ENCODE measurements at regions of chr2 and their contacts with region 1.

Region 1: DNA sequence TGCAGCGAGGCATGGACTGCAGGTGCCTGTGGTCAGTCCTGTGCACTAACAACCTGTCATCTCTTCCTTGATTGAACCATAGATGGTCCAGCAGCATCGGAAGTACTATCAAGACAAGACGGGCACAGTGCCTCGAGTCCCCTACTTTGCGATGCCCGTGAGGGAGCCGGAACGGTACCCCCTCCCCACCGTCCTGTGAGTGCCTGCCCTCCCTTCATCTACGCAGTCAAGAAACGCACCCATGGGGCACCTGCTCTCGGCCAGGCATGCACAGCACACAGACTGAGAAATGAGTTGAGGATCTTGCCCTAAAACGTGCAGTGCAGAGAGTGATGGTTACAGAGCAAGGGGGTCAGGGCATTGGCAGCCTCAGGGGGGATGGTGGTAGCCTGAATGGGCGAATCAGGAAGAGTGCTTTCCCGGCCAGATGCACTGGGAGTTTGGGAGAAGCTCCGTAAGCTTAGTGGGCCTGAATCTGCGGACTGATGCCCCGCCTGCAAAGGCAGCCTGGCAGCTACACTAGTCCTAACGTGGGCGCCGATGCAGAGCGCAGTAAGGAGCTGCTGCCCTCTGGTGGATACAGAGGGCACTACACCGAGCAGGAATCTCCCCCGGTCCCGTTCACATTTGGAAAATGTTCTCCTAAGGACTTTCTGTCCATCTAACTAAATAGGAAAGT is 63.6 kb downstream of the CIB4 start:
- DNase-seq: peak; percentile 71 to 95
- ATAC-seq: peak; percentile 73 to 93
- H3K4me3 ChIP-seq: no peak overlapping the region
- H3K27ac ChIP-seq: peak overlapping the region in 1 of 2 experiments; percentile 47; a peak in 3 of 6 replicates
- H3K4me1 ChIP-seq: peaks cover 4% of the 10 kb centered on the region; the same call in 2 of the 3 replicates
- CTCF ChIP-seq: peak; percentile 98
- EP300 ChIP-seq: no peak
- POLR2A ChIP-seq: no peak
- RAD21 ChIP-seq: peak; percentile 93 to 96

Region 2: DNA sequence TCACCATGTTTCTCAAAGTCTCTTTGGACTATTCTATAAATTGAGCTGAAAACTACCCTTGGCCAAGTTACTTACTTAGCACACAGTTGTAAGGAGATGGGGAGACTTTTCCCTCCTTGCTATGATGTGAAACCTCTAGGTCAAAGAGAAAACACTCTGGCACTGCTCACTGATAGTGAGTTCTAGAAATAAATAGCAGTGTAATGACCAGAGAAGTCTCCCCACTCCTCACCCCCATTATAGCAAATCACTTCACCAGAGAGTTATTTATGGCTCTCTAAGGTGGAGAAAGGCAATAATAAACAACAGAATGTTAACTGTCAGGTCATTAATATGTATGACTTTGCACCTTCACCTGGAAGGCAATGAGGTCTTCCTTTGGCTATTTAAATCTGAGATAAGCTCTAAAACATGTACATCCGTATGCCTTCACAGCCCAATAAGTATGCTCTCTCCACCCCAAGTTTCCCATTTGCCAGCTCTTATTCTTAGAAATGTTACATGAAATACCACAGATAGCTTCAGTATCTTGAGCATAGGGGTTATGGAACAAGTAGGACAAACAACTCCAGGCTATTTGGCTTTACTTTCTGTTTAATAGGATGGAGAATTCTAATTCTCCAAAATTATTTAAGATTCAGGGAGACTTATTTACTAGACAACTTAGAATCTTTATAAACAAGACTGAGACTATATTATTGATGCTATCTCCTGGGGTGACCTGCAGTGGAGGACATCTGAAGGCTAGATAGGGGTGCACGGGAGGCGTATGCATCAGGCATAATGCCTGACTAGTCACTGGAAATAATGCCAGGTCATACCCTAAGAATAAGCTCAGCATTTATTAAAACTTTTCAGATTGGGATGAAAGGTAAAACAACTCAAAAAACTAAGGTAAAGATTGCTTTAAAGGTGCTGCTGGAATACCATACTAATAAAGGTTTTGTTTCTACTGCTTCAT is 838.9 kb before region 1 on chr2:
- CTCF ChIA-PET with region 1: no interaction called
- POLR2A ChIA-PET with region 1: no interaction called
- DNase-seq: no peak
- ATAC-seq: no peak
- H3K4me3 ChIP-seq: no peak overlapping the region
- H3K27ac ChIP-seq: no peak overlapping the region
- H3K4me1 ChIP-seq: no peaks in the 10 kb centered on the region
- CTCF ChIP-seq: no peak
- EP300 ChIP-seq: no peak
- POLR2A ChIP-seq: no peak
- RAD21 ChIP-seq: no peak

Region 3: DNA sequence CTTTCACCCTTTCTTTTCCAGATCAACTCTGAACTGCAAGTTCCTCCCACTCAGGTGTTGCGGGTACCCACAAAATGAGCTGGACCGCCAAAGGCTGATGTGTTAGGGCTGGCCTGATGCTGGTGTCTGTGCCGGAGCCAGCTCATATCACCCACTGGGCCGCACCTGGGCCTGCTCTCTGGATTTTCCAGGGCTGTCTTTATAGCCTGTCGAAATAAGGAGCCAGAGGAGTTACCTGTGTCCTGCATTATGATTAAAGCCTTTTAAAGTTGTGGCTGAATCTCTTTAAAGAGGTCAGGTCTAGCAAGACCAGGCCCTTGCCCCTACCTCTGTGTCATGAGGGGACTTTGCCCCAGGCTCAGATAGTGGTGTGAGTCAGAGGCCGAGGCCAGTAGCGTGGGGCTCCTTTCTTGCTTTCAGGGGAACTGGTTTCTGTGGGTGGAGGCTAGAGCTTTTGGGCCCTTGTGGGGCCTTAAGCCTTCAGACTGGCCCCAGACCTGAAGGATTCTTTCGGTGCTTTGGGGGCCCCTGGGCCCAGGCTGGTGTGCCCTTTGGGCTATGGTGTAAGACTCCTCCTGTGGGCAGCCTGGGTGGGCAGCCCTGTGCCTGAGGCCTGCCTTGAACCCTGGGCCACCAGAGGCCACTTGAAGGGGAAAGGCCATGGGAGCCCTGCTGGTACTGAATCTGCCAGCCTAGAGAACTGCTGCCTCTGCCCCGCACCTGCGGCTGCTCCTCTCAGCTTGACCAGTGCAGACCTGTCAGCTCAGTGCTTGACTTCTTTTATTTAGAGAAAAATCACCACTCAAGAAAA is 120.9 kb before region 1 on chr2:
- CTCF ChIA-PET with region 1: interaction called, 10 read pairs
- POLR2A ChIA-PET with region 1: no interaction called
- DNase-seq: peak in 1 of 2 experiments; percentile 43
- ATAC-seq: peak; percentile 30 to 70; a peak in 3 of 6 replicates
- H3K4me3 ChIP-seq: no peak overlapping the region
- H3K27ac ChIP-seq: peak overlapping the region; percentile 55 to 73
- H3K4me1 ChIP-seq: peaks cover 11% of the 10 kb centered on the region
- CTCF ChIP-seq: no peak
- EP300 ChIP-seq: no peak
- POLR2A ChIP-seq: no peak
- RAD21 ChIP-seq: no peak

Region 4: GRCh38 chr2:26509141-26509540 is 68.4 kb before region 1 on chr2:
- CTCF ChIA-PET with region 1: interaction called, 90 read pairs
- POLR2A ChIA-PET with region 1: no interaction called
- DNase-seq: no peak
- ATAC-seq: no peak
- H3K4me3 ChIP-seq: no peak overlapping the region
- H3K27ac ChIP-seq: no peak overlapping the region
- H3K4me1 ChIP-seq: peaks cover 1% of the 10 kb centered on the region; the same call in 1 of the 3 replicates
- CTCF ChIP-seq: no peak
- EP300 ChIP-seq: no peak
- POLR2A ChIP-seq: no peak
- RAD21 ChIP-seq: no peak

Region 5: DNA sequence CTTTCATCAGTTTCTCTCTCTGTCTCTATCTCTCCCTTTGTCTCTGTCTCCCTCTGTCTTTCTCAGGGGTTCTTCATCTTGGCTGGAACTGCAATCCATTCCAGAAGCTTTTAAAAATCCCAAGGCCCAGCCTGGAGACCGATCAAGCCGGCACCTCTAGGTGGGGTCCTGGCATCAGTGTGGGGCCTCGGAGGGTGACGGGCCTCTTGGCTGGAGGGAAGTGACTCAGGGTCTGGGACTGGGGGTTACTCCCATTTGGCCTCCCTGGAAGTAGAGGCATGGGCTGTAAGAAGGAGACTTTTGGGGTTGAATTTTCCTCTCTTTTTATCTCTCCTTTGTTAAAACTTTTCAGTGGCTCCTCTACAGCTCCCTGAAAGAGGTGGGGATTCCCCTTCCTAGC is 46.9 kb before region 1 on chr2:
- CTCF ChIA-PET with region 1: interaction called, 20 read pairs
- POLR2A ChIA-PET with region 1: no interaction called
- DNase-seq: no peak
- ATAC-seq: peak in 1 of 2 experiments; percentile 25; a peak in 2 of 6 replicates
- H3K4me3 ChIP-seq: no peak overlapping the region
- H3K27ac ChIP-seq: no peak overlapping the region
- H3K4me1 ChIP-seq: no peaks in the 10 kb centered on the region
- CTCF ChIP-seq: no peak
- EP300 ChIP-seq: no peak
- POLR2A ChIP-seq: no peak
- RAD21 ChIP-seq: no peak

Region 6: DNA sequence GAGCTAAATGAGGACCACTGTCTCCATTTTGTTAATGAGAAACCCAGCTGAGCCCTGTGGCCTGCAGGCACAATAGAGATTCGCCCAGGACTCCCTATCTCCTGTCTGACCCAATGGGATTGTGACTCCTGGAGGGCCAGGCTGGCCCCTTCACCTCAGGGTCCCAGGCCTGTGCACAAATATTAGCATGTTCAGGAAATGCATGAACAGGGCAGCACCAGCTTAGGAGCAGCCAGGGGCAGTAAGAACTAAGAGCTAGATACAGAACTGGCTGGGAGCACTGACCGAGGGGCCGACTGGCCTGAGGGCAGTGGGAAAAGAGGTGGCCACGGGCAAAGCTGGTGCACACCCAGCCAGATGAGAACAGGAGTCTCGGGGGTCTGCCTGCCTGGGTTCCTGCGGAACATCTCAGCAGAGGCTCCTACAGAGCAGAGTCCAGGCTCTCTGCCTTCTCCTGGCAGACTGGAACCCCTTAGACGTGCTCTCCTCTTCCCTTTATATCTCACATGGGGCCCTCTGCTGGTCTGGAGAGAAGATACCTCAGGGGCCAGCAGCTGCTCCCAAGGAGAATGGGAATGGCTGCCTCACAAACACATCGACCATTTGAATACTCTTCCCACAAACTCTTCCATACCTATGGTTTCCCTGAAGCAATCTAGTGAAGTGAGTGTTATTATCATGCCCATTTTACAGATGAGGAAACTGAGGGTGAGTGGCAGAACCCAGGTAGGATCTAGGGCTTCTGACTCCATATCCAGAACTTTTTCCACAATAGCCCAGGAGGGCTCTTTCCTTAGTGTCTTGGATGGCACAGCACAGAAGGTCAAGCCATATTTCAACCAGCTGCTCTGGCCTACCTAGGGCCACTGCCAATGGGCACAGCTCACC is 22.1 kb before region 1 on chr2:
- CTCF ChIA-PET with region 1: interaction called, 237 read pairs
- POLR2A ChIA-PET with region 1: no interaction called
- DNase-seq: peak; percentile 37 to 47
- ATAC-seq: peak in 1 of 2 experiments; percentile 79; a peak in 3 of 6 replicates
- H3K4me3 ChIP-seq: no peak overlapping the region
- H3K27ac ChIP-seq: no peak overlapping the region
- H3K4me1 ChIP-seq: no peaks in the 10 kb centered on the region
- CTCF ChIP-seq: peak; percentile 20; the same call in 2 of the 3 replicates
- EP300 ChIP-seq: no peak
- POLR2A ChIP-seq: no peak
- RAD21 ChIP-seq: peak in 1 of 2 experiments; percentile 10; a peak in 1 of 5 replicates

Region 7: DNA sequence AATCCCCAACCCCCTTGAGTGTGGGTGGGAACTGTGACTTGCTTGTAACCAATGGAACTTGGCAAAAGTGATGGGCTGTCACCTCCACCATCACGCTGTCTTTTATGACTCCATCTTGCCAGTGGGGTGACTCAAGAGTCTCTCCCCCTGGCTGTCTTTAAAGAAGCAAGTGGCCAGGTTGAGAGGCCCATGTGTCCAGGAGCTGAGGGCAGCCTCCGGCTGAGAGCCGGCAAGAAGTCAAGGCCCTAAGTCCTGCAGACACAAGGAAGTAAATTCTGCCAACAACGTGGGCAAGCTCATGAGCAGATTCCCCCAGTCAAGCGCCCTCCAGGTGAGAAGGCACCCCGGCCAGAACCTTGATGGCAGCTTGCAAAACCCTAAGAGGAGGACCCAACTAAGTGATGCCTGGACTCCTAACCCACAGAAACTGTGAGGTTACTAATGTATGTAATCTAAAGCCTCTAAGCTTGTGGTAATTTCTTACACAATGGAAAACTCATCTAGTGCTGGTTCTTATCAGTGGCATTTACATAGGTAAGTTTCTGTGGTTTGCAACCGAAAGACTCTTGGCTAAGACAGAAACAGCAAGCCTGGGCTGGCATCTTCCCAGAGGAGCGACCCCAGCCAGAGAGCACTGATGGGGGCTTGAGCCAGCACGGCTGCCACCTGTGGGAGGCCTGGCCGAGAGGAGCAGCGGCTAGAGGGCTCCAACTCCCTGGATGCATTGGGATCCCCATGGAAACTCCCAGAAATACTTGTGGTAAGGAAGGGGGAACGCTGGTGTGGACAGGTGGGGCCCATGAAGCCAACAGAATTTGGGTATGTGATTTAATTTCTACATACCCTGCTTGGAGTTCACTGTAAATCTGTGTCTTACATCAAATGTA is 14.3 kb after region 1 on chr2:
- CTCF ChIA-PET with region 1: interaction called, 137 read pairs
- POLR2A ChIA-PET with region 1: no interaction called
- DNase-seq: no peak
- ATAC-seq: no peak
- H3K4me3 ChIP-seq: no peak overlapping the region
- H3K27ac ChIP-seq: no peak overlapping the region
- H3K4me1 ChIP-seq: 0 out of 3 replicates have a peak, but pooled peaks cover 7% of the 10 kb centered on the region
- CTCF ChIP-seq: no peak
- EP300 ChIP-seq: no peak
- POLR2A ChIP-seq: no peak
- RAD21 ChIP-seq: no peak

Region 8: DNA sequence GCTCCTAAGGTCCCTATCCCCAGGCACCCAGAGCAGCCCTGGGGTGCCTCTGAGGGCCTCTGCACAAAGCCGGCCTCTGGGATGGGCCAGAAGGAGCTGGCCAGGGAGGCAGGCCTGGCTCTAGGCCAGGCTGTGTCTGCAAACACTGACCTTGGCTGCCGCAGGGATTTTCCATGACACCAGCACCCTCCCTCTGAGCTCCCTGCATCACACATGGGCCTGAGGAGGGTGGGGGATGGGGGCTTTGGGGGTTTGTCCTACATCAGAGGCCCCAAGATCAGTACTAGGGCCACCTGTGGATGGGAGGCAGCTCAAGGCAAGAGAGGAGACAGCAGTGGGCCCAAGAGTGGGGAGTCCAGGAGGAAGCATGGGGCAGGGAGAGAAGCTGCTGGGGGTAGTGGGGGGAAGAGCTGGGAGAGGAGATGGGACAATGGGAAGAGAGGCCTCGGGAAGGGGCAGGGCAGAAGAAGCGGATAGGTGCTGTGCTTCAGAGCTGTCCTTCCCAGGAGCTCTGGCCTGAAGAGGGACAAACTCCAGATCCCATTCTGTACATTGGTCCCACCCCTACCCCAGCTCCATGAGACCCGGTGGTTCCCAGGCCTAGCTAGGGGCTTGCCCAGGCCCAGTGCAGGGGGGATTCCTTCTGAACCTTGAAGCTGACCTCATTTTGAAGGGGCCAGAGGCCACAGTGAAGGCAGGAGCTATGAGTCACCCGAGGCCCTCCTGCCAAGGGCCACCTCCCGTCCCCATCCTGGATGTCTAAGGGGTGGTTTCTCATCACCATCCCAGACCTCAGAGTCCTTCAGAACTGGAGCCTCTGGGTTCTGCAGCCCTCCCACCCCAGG is 143.0 kb after region 1 on chr2:
- CTCF ChIA-PET with region 1: interaction called, 14 read pairs
- POLR2A ChIA-PET with region 1: no interaction called
- DNase-seq: peak; percentile 86 to 95
- ATAC-seq: peak; percentile 59 to 67
- H3K4me3 ChIP-seq: no peak overlapping the region
- H3K27ac ChIP-seq: peak overlapping the region; percentile 94
- H3K4me1 ChIP-seq: peaks cover 80% of the 10 kb centered on the region
- CTCF ChIP-seq: no peak
- EP300 ChIP-seq: peak; percentile 43 to 70; a peak in 3 of 5 replicates
- POLR2A ChIP-seq: no peak; the same call in 1 of the 2 replicates
- RAD21 ChIP-seq: 0 out of 5 replicates have a peak, but pooled peaks of 1 of the 2 experiments have one; percentile 34